ENCODE measurements at regions of chr17 and their contacts with region 1.

Region 1: DNA sequence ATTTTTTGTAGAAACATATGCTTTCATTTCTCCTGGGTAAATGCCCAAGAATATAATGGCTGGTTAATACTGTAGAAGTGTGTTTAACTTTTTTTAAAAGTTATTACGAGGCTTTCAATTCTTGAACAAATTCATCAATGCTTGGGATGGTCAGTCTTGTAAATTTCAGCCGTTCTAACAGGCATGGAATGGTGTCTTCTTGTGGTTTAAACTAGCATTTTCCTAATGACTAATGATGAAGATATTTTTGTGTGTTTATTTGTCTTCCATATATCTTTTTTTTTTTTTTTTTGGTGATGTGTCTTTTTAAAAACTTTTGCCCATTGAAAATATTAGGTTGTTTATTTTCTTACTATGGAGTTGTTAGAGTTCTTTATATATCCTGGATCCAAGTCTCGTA is 67.1 kb downstream of the MGAT5B start:
- DNase-seq: peak; percentile 75
- ATAC-seq: peak; percentile 83
- H3K4me3 ChIP-seq: no peak overlapping the region
- H3K27ac ChIP-seq: no peak overlapping the region
- H3K4me1 ChIP-seq: peaks cover 10% of the 10 kb centered on the region
- H3K27me3 ChIP-seq: no peaks in the 10 kb centered on the region
- CTCF ChIP-seq: no peak

Region 2: GRCh38 chr17:76612977-76613851 is 322.1 kb before region 1 on chr17:
- CTCF ChIA-PET with region 1: no interaction called
- POLR2A ChIA-PET with region 1: no interaction called
- intact Hi-C with region 1: no loop called
- DNase-seq: no peak
- ATAC-seq: peak; percentile 24; the same call in 1 of the 2 replicates
- H3K4me3 ChIP-seq: no peak overlapping the region
- H3K27ac ChIP-seq: no peak overlapping the region
- H3K4me1 ChIP-seq: no peaks in the 10 kb centered on the region
- H3K27me3 ChIP-seq: no peaks in the 10 kb centered on the region
- CTCF ChIP-seq: peak; percentile 18; the same call in 1 of the 2 replicates

Region 3: DNA sequence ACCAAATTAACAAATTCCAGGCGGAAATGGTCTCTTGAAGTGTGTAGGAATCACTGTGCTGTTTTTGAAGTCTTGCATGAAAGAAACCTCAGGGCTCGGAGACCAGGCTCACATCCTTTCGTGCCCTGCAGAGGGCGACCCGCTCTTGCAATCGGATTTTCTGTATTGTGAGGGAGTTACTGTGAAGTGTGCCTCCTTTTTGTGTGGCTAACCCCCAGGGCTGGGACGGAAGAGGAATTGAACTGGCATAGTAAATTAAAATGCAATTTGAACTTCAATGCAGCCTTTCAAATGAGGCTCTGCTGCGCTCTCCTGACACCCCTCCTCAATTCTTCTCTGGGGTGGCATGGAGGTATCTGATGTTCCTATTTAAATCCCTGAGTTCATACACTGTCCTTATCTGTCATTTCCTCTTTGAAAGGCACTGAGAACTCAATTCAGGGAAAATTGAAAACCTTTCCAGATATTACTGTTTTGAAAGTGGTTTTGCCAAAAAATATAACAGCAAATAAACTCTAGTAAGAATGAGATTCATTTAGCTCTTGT is 118.7 kb before region 1 on chr17:
- CTCF ChIA-PET with region 1: no interaction called
- POLR2A ChIA-PET with region 1: no interaction called
- intact Hi-C with region 1: no loop called
- DNase-seq: peak; percentile 79
- ATAC-seq: peak; percentile 94
- H3K4me3 ChIP-seq: no peak overlapping the region
- H3K27ac ChIP-seq: no peak overlapping the region
- H3K4me1 ChIP-seq: no peaks in the 10 kb centered on the region
- H3K27me3 ChIP-seq: no peaks in the 10 kb centered on the region
- CTCF ChIP-seq: peak; percentile 96

Region 4: GRCh38 chr17:77002103-77003045 is 67.0 kb after region 1 on chr17:
- CTCF ChIA-PET with region 1: no interaction called
- POLR2A ChIA-PET with region 1: no interaction called
- intact Hi-C with region 1: loop called (anchors 1 kb)
- DNase-seq: peak; percentile 99
- ATAC-seq: peak; percentile 92
- H3K4me3 ChIP-seq: no peak overlapping the region
- H3K27ac ChIP-seq: peak overlapping the region; percentile 64
- H3K4me1 ChIP-seq: peaks cover 25% of the 10 kb centered on the region
- H3K27me3 ChIP-seq: no peaks in the 10 kb centered on the region
- CTCF ChIP-seq: no peak

Region 5: GRCh38 chr17:77528516-77529327 is 593.4 kb after region 1 on chr17:
- CTCF ChIA-PET with region 1: no interaction called
- POLR2A ChIA-PET with region 1: no interaction called
- intact Hi-C with region 1: no loop called
- DNase-seq: no peak
- ATAC-seq: no peak
- H3K4me3 ChIP-seq: no peak overlapping the region
- H3K27ac ChIP-seq: no peak overlapping the region
- H3K4me1 ChIP-seq: no peaks in the 10 kb centered on the region
- H3K27me3 ChIP-seq: peaks cover 26% of the 10 kb centered on the region
- CTCF ChIP-seq: no peak

Measured in PC-3 (cell line).